HepG2 (cell line): ENCODE measurements at regions of chr4 and their contacts with region 1.

Region 1: DNA sequence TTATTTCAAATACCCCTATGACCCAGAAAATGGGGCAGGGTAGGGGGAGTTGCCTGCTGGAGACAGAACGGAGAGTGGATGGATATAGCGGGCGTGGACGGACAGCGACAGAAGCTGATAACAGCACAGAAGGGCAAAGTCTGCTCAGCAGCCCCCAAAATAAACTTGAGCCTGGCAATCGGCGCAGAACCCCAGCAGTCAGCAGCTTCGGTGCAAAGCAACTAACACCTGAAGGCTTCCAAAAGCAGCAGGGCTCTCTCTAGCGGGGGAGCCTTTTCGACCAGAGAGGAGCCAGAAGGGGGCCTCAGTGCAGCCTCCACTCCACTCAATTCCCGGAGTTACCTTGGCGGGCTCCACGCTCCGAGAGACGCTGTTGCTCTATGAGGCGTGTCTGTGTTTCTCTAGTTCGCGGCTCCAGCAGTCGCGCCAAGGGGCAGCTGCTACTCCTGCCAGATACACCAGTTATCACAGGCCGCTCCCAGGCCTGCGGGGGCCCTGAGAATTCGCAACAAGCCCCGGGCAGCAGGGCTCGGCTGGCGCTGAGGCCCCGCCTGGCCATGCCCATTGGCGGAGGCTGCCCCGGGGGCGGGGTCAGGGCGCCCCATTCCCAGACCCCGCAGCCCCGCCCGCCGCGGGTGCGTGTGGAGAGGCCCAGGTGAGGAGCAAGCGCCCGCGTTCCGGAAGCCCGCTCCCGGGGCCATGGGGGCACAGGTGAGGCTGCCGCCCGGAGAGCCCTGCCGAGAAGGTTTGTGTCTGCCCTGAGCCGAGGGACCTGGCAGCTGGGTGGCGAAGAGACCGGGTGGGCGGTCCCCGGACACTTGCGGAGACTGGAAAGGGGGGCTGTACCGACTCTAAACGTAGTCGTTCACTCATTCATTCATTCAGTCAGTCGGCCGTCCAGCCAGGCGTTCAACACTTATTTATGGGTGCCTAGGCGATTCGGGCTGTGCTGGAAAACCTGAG is at the starts of genes CNGA1 and NIPAL1:
- DNase-seq: peak; percentile 66
- ATAC-seq: peak; percentile 97
- H3K4me3 ChIP-seq: peak within 1 kb of the TSS; percentile 69 to 80 (median 76)
- H3K27ac ChIP-seq: peak within 1 kb of the TSS; percentile 74
- H3K4me1 ChIP-seq: peaks cover 20% of the 10 kb centered on the region
- H3K27me3 ChIP-seq: no peaks in the 10 kb centered on the region; a peak in 1 of 5 replicates
- CTCF ChIP-seq: peak; percentile 78
- EP300 ChIP-seq: 0 out of 4 replicates have a peak, but pooled peaks of 1 of the 2 experiments have one; percentile 15
- POLR2A ChIP-seq: peak in 1 of 2 experiments; percentile 67; a peak in 2 of 4 replicates
- RAD21 ChIP-seq: peak; percentile 56
- total RNA-seq, gene CNGA1: 0.22 TPM in 1 of 2 replicates, not detected in the other
- total RNA-seq, gene NIPAL1: 1.4 and 1.6 TPM in 2 replicates

Region 2: GRCh38 chr4:47852136-47852535 is 164.3 kb before region 1 on chr4:
- CTCF ChIA-PET with region 1: no interaction called
- POLR2A ChIA-PET with region 1: no interaction called
- in situ Hi-C with region 1: no loop called
- intact Hi-C with region 1: no loop called
- DNase-seq: no peak
- ATAC-seq: no peak
- H3K4me3 ChIP-seq: no peak overlapping the region
- H3K27ac ChIP-seq: no peak overlapping the region
- H3K4me1 ChIP-seq: no peaks in the 10 kb centered on the region
- H3K27me3 ChIP-seq: no peaks in the 10 kb centered on the region
- CTCF ChIP-seq: no peak
- EP300 ChIP-seq: no peak
- POLR2A ChIP-seq: no peak
- RAD21 ChIP-seq: no peak

Region 3: GRCh38 chr4:47914220-47914925 is 102.0 kb before region 1 on chr4 and contains the start of gene NFXL1:
- CTCF ChIA-PET with region 1: no interaction called
- POLR2A ChIA-PET with region 1: no interaction called
- in situ Hi-C with region 1: no loop called
- intact Hi-C with region 1: loop called (anchors 5 kb)
- DNase-seq: peak; percentile 95
- ATAC-seq: peak; percentile 97
- H3K4me3 ChIP-seq: peak within 1 kb of the TSS; percentile 80 to 96 (median 96)
- H3K27ac ChIP-seq: peak within 1 kb of the TSS; percentile 87
- H3K4me1 ChIP-seq: peaks cover 40% of the 10 kb centered on the region
- H3K27me3 ChIP-seq: no peaks in the 10 kb centered on the region; a peak in 1 of 5 replicates
- CTCF ChIP-seq: no peak
- EP300 ChIP-seq: 0 out of 4 replicates have a peak, but pooled peaks of 1 of the 2 experiments have one; percentile 23
- POLR2A ChIP-seq: peak; percentile 97 to 98
- RAD21 ChIP-seq: no peak
- total RNA-seq, gene NFXL1: 18.6 and 22.6 TPM in 2 replicates

Region 4: DNA sequence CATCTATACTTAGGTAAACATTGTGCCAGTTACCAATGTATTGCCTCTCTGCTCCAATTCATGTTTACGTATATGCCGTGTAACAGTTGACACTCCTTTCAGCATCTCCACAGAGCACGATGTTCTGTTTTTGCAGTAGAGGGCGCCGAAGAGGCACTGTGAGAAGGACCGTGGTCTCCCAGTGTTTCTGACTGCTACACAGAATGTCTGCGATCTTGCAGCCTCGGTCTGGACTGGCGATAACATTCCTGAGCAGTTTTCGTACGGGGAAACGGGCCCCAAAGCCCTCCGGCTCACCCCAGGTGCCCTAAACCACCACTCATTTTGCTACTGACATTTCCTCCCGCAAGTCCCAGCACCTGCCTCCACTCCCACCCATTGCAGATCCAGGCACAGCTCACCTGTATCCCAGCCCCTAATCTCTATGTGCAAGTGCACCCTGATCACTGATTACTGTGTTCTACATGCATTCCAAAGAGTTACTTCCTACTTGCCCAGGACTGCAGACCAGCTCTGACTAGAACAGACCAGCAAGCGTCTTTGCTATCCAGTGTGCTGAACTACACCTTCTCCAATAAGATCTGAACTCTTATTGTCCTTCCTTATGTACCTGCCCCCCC is 89.7 kb before region 1 on chr4:
- CTCF ChIA-PET with region 1: no interaction called
- POLR2A ChIA-PET with region 1: no interaction called
- in situ Hi-C with region 1: no loop called
- intact Hi-C with region 1: loop called (anchors 5 kb)
- DNase-seq: peak; percentile 61
- ATAC-seq: peak; percentile 100
- H3K4me3 ChIP-seq: peak overlapping the region; percentile 3 to 64 (median 24); a peak in 3 of 6 replicates
- H3K27ac ChIP-seq: no peak overlapping the region
- H3K4me1 ChIP-seq: peaks cover 14% of the 10 kb centered on the region
- H3K27me3 ChIP-seq: no peaks in the 10 kb centered on the region
- CTCF ChIP-seq: peak; percentile 89
- EP300 ChIP-seq: no peak
- POLR2A ChIP-seq: no peak
- RAD21 ChIP-seq: 0 out of 2 replicates have a peak, but pooled peaks have one; percentile 11

Region 5: DNA sequence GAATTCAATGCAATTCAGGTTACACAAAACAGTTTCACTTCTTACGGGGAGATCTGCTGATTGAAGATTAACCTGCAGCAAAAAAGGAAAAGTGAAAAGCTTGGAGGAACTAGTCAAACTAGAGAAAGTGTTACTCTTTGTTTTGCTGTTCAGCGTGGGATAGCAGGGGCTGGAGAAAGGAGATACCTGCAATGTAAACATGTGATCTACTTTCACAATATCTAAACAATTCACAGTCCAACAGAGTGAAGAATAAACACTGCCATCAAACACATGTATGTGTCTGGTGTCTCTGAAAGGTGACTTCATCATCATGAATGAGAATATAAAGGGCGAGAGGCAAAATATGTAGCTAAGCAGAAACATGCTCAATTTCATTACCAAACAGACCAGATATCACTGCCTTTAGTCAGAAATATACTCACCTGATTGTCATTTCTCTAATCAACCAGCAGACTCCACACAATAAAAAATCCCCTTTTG is 26.6 kb after region 1 on chr4:
- CTCF ChIA-PET with region 1: no interaction called
- POLR2A ChIA-PET with region 1: no interaction called
- in situ Hi-C with region 1: no loop called
- intact Hi-C with region 1: loop called (anchors 1 kb)
- DNase-seq: peak; percentile 77
- ATAC-seq: peak; percentile 96
- H3K4me3 ChIP-seq: peak overlapping the region in 1 of 3 experiments; percentile 28; a peak in 1 of 6 replicates
- H3K27ac ChIP-seq: peak overlapping the region; percentile 72
- H3K4me1 ChIP-seq: peaks cover 69% of the 10 kb centered on the region
- H3K27me3 ChIP-seq: no peaks in the 10 kb centered on the region
- CTCF ChIP-seq: no peak
- EP300 ChIP-seq: peak in 1 of 2 experiments; percentile 75; a peak in 2 of 4 replicates
- POLR2A ChIP-seq: no peak
- RAD21 ChIP-seq: no peak